Ovary (tissue), 10 donors: ENCODE measurements at regions of chr1 and their contacts with region 1.

Region 1: GRCh38 chr1:63773815-63774616 is at the start of gene ROR1:
- DNase-seq: peak; percentile 83 to 90 (median 85)
- H3K4me3 ChIP-seq: peak within 1 kb of the TSS; percentile 53
- H3K27ac ChIP-seq: peak within 1 kb of the TSS; percentile 42 to 78
- H3K4me1 ChIP-seq: peaks cover 2% of the 10 kb centered on the region
- H3K27me3 ChIP-seq: no peaks in the 10 kb centered on the region
- CTCF ChIP-seq: peak; percentile 62 to 68 (median 63)
- EP300 ChIP-seq: no peak
- POLR2A ChIP-seq: no peak
- total RNA-seq, gene ROR1: 8.7 to 26.1 (median 17.5) TPM

Region 2: GRCh38 chr1:63691701-63692425 is 82.2 kb before region 1 on chr1:
- intact Hi-C with region 1: loop called in 1 of 4 experiments (anchors 10 kb)
- DNase-seq: peak in 3 of 5 donors; percentile 28 to 64 (median 44)
- H3K4me3 ChIP-seq: no peak overlapping the region
- H3K27ac ChIP-seq: peak overlapping the region in 1 of 2 donors; percentile 48
- H3K4me1 ChIP-seq: no peaks in the 10 kb centered on the region
- H3K27me3 ChIP-seq: no peaks in the 10 kb centered on the region
- CTCF ChIP-seq: peak in 2 of 3 donors; percentile 56 to 72
- EP300 ChIP-seq: no peak
- POLR2A ChIP-seq: no peak

Region 3: GRCh38 chr1:63917571-63918417 is 143.8 kb after region 1 on chr1:
- intact Hi-C with region 1: loop called in 2 of 4 experiments (anchors 10 kb)
- DNase-seq: no peak
- H3K4me3 ChIP-seq: no peak overlapping the region
- H3K27ac ChIP-seq: no peak overlapping the region
- H3K4me1 ChIP-seq: no peaks in the 10 kb centered on the region
- H3K27me3 ChIP-seq: no peaks in the 10 kb centered on the region
- CTCF ChIP-seq: no peak
- EP300 ChIP-seq: no peak
- POLR2A ChIP-seq: no peak

Region 4: GRCh38 chr1:64006276-64007051 is 232.4 kb after region 1 on chr1:
- intact Hi-C with region 1: no loop called
- DNase-seq: no peak
- H3K4me3 ChIP-seq: no peak overlapping the region
- H3K27ac ChIP-seq: no peak overlapping the region
- H3K4me1 ChIP-seq: no peaks in the 10 kb centered on the region
- H3K27me3 ChIP-seq: no peaks in the 10 kb centered on the region
- CTCF ChIP-seq: no peak
- EP300 ChIP-seq: no peak
- POLR2A ChIP-seq: no peak

Region 5: DNA sequence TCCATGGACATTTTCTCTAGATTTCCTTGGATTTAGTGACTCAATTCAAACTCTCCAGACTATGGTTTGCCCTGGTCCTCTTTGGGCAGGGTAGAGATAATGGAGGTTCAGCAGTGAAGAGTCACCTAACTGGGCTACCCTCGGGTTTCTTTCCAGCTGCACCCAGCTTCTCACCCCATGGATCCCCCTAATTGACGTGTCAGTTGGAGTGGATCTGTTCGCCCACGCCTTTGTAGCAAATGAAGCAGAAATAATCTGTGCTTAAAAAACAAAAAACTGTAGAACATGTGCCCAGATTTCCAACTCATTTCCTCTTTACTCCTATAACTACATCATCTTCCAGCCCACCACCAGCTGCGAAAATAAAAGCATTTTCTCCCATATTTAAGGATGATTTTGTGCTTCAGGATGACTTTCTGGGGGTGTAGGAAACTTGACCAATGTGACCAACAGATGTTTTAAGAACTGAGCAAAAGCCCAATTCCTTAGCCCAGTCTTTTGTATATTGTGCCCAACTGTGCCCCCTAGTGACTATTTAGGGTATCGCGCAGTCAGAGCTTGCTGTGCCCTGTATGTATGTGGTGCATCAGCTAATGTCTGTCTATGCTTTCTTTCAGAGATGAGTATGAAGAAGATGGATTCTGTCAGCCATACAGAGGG is 362.9 kb after region 1 on chr1:
- intact Hi-C with region 1: loop called in 3 of 4 experiments (anchors 5 kb)
- DNase-seq: peak; percentile 72 to 88 (median 83)
- H3K4me3 ChIP-seq: no peak overlapping the region
- H3K27ac ChIP-seq: no peak overlapping the region
- H3K4me1 ChIP-seq: peaks cover 3% of the 10 kb centered on the region
- H3K27me3 ChIP-seq: no peaks in the 10 kb centered on the region
- CTCF ChIP-seq: peak; percentile 49 to 90 (median 90)
- EP300 ChIP-seq: no peak
- POLR2A ChIP-seq: no peak

Region 6: DNA sequence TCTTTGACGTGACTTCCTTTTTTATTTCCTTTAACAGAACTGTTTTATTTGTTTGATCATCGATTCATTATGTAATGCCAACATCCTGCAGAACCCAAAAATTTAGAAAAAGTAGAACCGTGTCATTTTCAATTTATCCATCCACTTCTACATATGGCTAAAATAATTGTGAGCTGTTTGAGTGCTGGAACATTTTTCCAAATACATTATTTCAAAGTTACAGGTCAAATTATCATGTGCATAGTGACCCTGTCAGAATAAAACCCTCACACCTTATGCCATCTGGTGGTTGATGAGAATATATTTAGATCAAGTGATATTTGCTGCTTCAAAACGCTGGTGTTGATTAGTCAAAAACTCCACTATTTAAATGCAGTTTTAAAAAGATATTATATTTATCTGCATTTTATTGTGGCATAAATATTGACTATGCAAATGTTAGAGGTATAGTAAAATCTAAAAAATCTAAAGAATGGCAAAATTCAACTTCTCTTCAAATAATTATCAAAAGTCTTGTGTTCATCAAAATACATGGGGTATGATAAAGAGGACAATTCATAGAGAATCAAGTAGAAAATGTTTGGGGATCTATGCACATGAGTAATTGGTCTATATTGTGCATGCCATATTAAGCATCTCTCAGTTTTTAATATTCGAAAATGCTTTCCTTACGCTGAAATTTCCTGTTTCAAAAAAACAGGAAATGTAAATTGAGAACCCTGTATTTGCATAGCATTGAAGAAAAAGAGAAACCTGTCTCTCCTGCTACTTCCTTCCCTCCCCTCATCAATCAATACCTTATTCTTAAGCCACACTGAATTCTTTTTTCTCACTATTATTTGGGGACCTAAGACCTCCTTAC is 469.1 kb after region 1 on chr1:
- intact Hi-C with region 1: loop called in 2 of 4 experiments (anchors 10 kb)
- DNase-seq: no peak
- H3K4me3 ChIP-seq: no peak overlapping the region
- H3K27ac ChIP-seq: no peak overlapping the region
- H3K4me1 ChIP-seq: no peaks in the 10 kb centered on the region
- H3K27me3 ChIP-seq: no peaks in the 10 kb centered on the region
- CTCF ChIP-seq: peak in 2 of 3 donors; percentile 42 to 51
- EP300 ChIP-seq: no peak
- POLR2A ChIP-seq: no peak